ENCODE measurements at regions of chr17 and their contacts with region 1.

Region 1: GRCh38 chr17:82716203-82717010 is at the start of gene FN3KRP:
- DNase-seq: peak; percentile 92
- ATAC-seq: peak; percentile 78
- H3K4me3 ChIP-seq: peak within 1 kb of the TSS; percentile 73 to 91 (median 74)
- H3K27ac ChIP-seq: peak within 1 kb of the TSS; percentile 72
- H3K4me1 ChIP-seq: peaks cover 50% of the 10 kb centered on the region
- H3K27me3 ChIP-seq: no peaks in the 10 kb centered on the region
- CTCF ChIP-seq: no peak
- EP300 ChIP-seq: no peak
- POLR2A ChIP-seq: peak; percentile 69 to 76
- RAD21 ChIP-seq: no peak
- total RNA-seq, gene FN3KRP: 28.2 and 36.1 TPM in 2 replicates

Region 2: DNA sequence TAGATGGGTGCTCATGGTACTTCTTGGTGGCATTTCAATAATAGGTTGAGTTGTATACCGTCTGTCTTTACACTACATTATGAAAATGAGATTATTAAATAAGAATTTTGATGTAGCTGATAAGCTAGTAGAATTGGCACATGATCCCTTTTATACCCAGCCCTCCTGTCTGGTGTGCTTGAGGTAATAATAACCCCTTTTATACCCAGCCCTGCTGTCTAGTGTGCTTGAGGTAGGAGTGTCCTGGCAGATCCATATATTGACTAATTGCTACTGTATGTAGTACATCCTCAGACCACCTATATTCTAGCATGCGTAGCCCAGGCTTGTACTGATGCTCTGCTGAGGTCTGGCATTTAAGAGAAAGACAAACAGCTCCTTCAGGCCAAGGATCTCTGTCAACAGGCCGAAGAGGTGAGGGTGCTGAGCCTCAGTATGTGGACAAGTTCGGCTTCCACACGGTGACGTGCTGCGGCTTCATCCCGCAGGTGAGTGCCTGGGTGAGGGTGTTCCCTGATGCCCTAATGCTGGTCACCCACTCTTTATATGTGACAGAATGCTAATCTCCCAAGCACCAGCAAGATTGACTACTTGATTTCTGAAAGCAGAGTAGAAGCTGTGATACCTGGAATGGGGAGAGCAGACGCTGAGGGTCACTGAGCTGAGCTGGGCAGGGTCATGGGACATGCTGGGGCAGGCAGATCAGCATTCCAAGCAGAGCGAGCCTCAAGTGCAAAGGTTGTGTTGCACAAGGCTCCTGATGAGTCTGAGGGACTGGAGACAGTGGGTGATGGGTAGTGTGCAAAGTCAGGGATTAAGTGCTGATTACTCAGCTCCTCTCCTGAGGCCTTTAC is 24.7 kb after region 1 on chr17:
- CTCF ChIA-PET with region 1: no interaction called
- POLR2A ChIA-PET with region 1: interaction called, 25 read pairs
- in situ Hi-C with region 1: no loop called
- intact Hi-C with region 1: loop called (anchors 2 kb)
- DNase-seq: peak; percentile 93
- ATAC-seq: peak; percentile 68
- H3K4me3 ChIP-seq: no peak overlapping the region
- H3K27ac ChIP-seq: peak overlapping the region; percentile 74
- H3K4me1 ChIP-seq: peaks cover 58% of the 10 kb centered on the region
- H3K27me3 ChIP-seq: no peaks in the 10 kb centered on the region
- CTCF ChIP-seq: no peak
- EP300 ChIP-seq: peak; percentile 85 to 87; a peak in 3 of 4 replicates
- POLR2A ChIP-seq: no peak
- RAD21 ChIP-seq: peak; percentile 59; the same call in 1 of the 2 replicates

Region 3: DNA sequence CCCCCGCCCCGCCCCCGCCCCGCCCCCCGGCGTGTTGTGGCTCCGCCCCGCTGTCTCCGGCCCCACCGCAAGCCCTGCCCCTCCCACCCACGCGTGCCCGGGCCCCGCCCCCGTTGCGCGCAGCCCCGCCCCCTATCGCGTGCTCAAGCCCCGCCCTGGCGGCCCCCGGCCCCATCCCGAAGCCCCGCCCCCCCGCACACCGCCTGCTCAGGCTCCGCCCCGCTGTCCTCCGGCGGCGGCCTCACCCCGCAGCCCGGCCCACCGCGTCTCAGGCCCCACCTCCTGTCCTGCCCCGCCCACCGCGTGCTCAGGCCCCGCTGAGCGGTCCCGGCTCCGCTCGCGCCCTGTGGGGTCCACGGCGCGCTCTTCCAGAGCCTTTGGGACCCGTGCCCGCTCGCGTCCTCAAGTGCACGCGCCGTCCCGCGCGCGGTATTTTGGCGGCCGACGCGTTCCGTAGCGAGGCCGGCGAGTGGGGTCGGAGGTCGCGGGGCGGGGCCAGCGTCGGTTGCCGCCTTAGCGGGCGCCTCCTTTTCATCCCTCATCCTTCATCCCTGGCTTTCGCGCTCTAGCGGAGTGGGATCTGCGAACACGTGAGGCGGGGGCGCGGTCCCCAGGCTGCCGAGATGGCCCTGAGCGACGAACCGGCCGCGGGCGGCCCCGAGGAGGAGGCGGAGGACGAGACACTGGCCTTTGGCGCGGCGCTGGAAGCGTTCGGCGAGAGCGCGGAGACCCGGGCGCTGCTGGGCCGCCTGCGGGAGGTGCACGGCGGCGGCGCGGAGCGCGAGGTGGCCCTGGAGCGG is 35.4 kb after region 1 on chr17 and contains the start of gene TBCD:
- CTCF ChIA-PET with region 1: no interaction called
- POLR2A ChIA-PET with region 1: interaction called, 3 read pairs
- in situ Hi-C with region 1: loop called (anchors 5 kb)
- intact Hi-C with region 1: loop called (anchors 5 kb)
- DNase-seq: peak; percentile 71
- ATAC-seq: peak; percentile 83
- H3K4me3 ChIP-seq: peak within 1 kb of the TSS; percentile 73 to 98 (median 95)
- H3K27ac ChIP-seq: peak within 1 kb of the TSS; percentile 84
- H3K4me1 ChIP-seq: peaks cover 22% of the 10 kb centered on the region
- H3K27me3 ChIP-seq: no peaks in the 10 kb centered on the region; a peak in 1 of 5 replicates
- CTCF ChIP-seq: peak; percentile 25
- EP300 ChIP-seq: peak in 1 of 2 experiments; percentile 17; a peak in 1 of 4 replicates
- POLR2A ChIP-seq: no peak
- RAD21 ChIP-seq: peak; percentile 74
- total RNA-seq, gene TBCD: 33.9 and 49.6 TPM in 2 replicates

Region 4: GRCh38 chr17:82767041-82767754 is 50.8 kb after region 1 on chr17:
- CTCF ChIA-PET with region 1: interaction called, 10 read pairs
- POLR2A ChIA-PET with region 1: no interaction called
- in situ Hi-C with region 1: no loop called
- intact Hi-C with region 1: loop called (anchors 2 kb)
- DNase-seq: peak; percentile 49
- ATAC-seq: peak; percentile 81
- H3K4me3 ChIP-seq: no peak overlapping the region
- H3K27ac ChIP-seq: no peak overlapping the region
- H3K4me1 ChIP-seq: no peaks in the 10 kb centered on the region
- H3K27me3 ChIP-seq: no peaks in the 10 kb centered on the region
- CTCF ChIP-seq: peak; percentile 85
- EP300 ChIP-seq: no peak
- POLR2A ChIP-seq: no peak
- RAD21 ChIP-seq: peak; percentile 90

Measured in HepG2 (cell line).